Activated T-helper 1 cell treated with anti-CD3 and anti-CD28 coated beads, Interleukin-12 subunit alpha, Interleukin-12 subunit beta, Interleukin-2, Interleukin-4 antibody, amounts not matched to agents 30 ng/mL and 10 ng/mL and 1 ng/mL, durations not matched to agents 14 hours and 24 hours and 36 hours (primary cell): ENCODE measurements at regions of chr10 and their contacts with region 1.

Region 1: DNA sequence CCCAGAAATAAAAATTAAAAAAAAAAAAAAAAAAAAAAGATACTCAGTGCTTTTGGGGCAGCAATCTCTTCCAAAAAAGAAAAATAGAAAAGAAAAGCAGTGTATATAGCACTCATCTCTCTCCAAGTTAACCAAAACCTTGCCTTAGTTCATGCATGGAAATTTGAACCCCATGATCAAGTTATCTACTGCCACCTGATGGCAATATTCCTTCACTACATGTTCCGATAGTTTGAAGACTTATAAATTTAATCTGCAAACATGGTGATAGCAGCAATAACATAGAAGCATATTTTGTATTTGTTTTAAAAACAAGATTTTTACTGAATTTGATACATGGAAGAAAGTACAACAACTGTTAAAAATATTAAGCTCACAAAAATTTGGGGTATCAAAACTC is 48.6 kb upstream of the SLIT1 start:
- DNase-seq: no peak
- H3K4me3 Mint-ChIP-seq: no peak overlapping the region
- H3K27ac Mint-ChIP-seq: no peak overlapping the region
- H3K4me1 Mint-ChIP-seq: peaks cover 12% of the 10 kb centered on the region
- H3K27me3 Mint-ChIP-seq: no peaks in the 10 kb centered on the region

Region 2: GRCh38 chr10:96252730-96253129 is 981.7 kb before region 1 on chr10:
- intact Hi-C with region 1: no loop called
- DNase-seq: no peak
- H3K4me3 Mint-ChIP-seq: no peak overlapping the region
- H3K27ac Mint-ChIP-seq: no peak overlapping the region
- H3K4me1 Mint-ChIP-seq: no peaks in the 10 kb centered on the region
- H3K27me3 Mint-ChIP-seq: peaks cover 4% of the 10 kb centered on the region

Region 3: GRCh38 chr10:96930469-96930868 is 303.9 kb before region 1 on chr10:
- intact Hi-C with region 1: no loop called
- DNase-seq: no peak
- H3K4me3 Mint-ChIP-seq: no peak overlapping the region
- H3K27ac Mint-ChIP-seq: no peak overlapping the region
- H3K4me1 Mint-ChIP-seq: no peaks in the 10 kb centered on the region
- H3K27me3 Mint-ChIP-seq: no peaks in the 10 kb centered on the region

Region 4: GRCh38 chr10:97072851-97073665 is 161.3 kb before region 1 on chr10:
- intact Hi-C with region 1: loop called (anchors 1 kb)
- DNase-seq: peak; percentile 61
- H3K4me3 Mint-ChIP-seq: no peak overlapping the region
- H3K27ac Mint-ChIP-seq: no peak overlapping the region
- H3K4me1 Mint-ChIP-seq: peaks cover 8% of the 10 kb centered on the region
- H3K27me3 Mint-ChIP-seq: peaks cover 10% of the 10 kb centered on the region

Region 5: DNA sequence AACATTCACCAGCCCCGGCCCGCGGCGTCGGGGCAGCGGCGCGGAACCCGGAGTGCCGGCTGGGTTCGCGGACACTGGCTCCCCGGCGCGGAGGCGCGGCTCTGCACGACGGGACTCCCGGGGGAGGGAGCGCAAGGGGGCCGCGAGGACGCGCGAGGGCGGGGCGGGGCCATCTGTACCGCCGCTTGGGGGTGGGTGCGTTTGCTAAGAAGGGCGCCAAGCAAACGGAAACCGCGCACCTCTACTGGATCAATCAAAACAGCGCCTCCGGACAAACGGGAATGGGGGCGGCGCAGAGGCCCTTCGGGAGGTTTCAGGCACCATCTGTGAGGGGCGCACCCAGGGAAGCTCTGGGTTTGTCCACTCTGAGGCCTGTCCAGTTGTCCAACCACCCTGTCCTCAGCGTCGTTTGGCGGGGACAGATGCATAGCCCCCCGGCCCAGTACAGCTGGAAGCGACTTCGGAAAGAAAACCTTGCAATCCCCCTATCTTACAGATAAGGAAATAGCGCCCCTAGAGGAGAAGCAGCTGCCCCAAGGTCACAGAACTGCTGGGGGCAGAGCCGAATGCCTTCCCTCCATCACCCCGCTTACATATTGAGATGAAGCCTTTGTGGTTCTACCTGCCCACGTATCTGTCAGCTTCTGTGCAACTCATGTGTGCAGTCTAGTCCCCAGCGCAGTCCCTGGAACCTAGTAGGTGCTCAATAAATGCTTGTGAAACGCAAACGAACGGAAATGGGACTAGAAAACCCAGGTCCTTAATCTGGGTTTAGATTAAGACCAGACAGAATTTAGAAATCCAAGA is 38.0 kb before region 1 on chr10:
- intact Hi-C with region 1: loop called (anchors 2 kb)
- DNase-seq: peak; percentile 50
- H3K4me3 Mint-ChIP-seq: peak overlapping the region; percentile 75
- H3K27ac Mint-ChIP-seq: no peak overlapping the region
- H3K4me1 Mint-ChIP-seq: peaks cover 13% of the 10 kb centered on the region
- H3K27me3 Mint-ChIP-seq: peaks cover 62% of the 10 kb centered on the region